Right cardiac atrium (tissue), 5 donors: ENCODE measurements at regions of chr14 and their contacts with region 1.

Region 1: DNA sequence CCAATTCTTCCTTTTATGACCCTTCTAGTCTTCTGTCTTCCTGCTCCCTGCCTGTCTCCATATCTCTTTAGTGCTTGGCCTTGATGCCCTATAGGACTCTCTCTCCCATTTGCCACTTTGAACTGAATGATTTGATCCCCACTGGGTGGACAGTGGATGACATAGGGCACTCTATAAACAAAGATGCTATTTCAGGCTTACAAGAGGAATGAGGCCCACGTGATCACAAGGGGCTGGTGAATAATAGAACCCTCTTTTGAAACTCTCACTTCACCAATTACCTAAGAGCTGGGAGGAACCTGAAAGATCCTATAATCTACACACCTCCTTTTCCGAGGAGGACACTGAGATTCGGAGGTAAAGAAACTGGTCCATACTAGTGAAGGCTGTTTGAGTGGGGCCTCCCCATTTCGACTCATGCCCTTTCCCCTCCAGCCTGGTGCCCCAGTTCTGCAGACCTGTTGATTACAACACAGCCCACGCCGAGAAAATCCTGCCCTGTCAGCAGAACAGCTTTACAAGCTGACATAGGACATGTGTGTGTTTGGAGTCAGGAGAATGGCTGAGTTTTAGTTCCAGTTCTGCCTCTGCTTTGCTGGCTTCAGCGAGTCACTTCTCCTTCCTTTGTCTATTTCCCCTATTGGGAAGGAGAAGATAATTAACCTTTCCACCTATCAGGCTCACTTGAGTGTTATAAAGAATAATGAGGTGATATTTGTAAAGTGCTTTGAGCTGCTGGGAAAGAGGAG is 400.3 kb downstream of the ZFP36L1 start:
- DNase-seq: peak; percentile 63 to 83 (median 79)
- ATAC-seq: peak; percentile 51 to 64
- H3K4me3 ChIP-seq: no peak overlapping the region
- H3K27ac ChIP-seq: peak overlapping the region; percentile 85
- H3K4me1 ChIP-seq: peaks cover 18% of the 10 kb centered on the region
- H3K27me3 ChIP-seq: no peaks in the 10 kb centered on the region

Region 2: DNA sequence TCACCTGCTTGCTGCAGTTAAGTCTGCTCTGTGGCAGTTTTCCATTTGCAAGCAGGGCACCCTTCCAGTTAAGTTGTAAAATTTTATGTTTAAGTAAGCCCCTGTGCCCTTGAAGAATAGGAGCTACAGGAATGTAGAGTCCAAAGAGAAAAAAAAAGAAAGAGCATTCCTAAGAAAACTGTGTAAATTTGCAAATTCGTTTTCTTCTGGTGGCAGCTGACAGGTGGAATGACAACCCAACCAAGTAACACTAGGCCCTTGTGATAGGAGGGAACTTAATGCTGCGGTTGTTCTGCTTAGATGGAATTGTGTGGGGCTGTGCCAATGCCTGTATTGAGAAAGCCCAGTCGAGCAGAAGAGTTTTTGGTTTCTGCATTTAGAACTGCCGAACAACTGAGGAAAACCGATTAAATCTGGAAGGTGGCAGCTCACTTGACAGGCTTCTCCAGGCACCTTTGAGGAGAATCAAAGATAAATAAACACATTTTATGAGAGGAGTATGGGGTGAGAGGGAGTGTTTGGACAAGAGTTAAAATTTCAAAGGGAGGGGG is 293.0 kb before region 1 on chr14:
- intact Hi-C with region 1: no loop called
- DNase-seq: no peak
- ATAC-seq: no peak
- H3K4me3 ChIP-seq: no peak overlapping the region
- H3K27ac ChIP-seq: no peak overlapping the region
- H3K4me1 ChIP-seq: no peaks in the 10 kb centered on the region
- H3K27me3 ChIP-seq: no peaks in the 10 kb centered on the region

Region 3: DNA sequence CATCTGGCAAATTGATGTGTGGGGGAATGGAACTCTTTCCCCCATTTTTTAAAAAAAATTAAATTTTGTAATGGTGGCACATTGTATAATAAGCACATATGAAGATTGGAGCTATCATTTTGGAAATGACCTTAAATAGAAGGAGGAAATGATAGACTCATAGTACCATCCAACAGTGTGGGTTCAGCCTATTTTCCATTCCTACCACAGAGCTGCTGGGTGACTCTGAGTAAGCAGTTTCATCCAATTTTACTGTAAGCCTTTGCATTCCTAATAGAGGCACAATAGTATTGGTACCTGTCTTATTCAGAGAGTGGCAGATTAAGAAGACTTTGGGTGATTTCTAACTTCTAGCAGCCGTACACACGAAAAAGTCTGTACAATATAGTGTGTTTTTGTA is 268.5 kb before region 1 on chr14:
- intact Hi-C with region 1: no loop called
- DNase-seq: no peak
- ATAC-seq: no peak
- H3K4me3 ChIP-seq: no peak overlapping the region
- H3K27ac ChIP-seq: no peak overlapping the region
- H3K4me1 ChIP-seq: no peaks in the 10 kb centered on the region
- H3K27me3 ChIP-seq: no peaks in the 10 kb centered on the region

Region 4: GRCh38 chr14:68199554-68200151 is 192.9 kb before region 1 on chr14:
- intact Hi-C with region 1: no loop called
- DNase-seq: peak; percentile 51 to 72 (median 55)
- ATAC-seq: peak; percentile 88 to 97
- H3K4me3 ChIP-seq: no peak overlapping the region
- H3K27ac ChIP-seq: peak overlapping the region; percentile 83
- H3K4me1 ChIP-seq: peaks cover 1% of the 10 kb centered on the region
- H3K27me3 ChIP-seq: no peaks in the 10 kb centered on the region

Region 5: GRCh38 chr14:68458840-68459469 is 66.4 kb after region 1 on chr14:
- intact Hi-C with region 1: loop called in 1 of 4 experiments (anchors 10 kb)
- DNase-seq: peak in 1 of 3 donors; percentile 32
- ATAC-seq: peak; percentile 57 to 76
- H3K4me3 ChIP-seq: no peak overlapping the region
- H3K27ac ChIP-seq: peak overlapping the region; percentile 55
- H3K4me1 ChIP-seq: peaks cover 8% of the 10 kb centered on the region
- H3K27me3 ChIP-seq: no peaks in the 10 kb centered on the region

Region 6: GRCh38 chr14:68510201-68511128 is 117.9 kb after region 1 on chr14:
- intact Hi-C with region 1: loop called in 1 of 4 experiments (anchors 10 kb)
- DNase-seq: peak in 1 of 3 donors; percentile 67
- ATAC-seq: peak in 1 of 2 donors; percentile 16
- H3K4me3 ChIP-seq: no peak overlapping the region
- H3K27ac ChIP-seq: peak overlapping the region; percentile 12
- H3K4me1 ChIP-seq: peaks cover 11% of the 10 kb centered on the region
- H3K27me3 ChIP-seq: no peaks in the 10 kb centered on the region

Region 7: DNA sequence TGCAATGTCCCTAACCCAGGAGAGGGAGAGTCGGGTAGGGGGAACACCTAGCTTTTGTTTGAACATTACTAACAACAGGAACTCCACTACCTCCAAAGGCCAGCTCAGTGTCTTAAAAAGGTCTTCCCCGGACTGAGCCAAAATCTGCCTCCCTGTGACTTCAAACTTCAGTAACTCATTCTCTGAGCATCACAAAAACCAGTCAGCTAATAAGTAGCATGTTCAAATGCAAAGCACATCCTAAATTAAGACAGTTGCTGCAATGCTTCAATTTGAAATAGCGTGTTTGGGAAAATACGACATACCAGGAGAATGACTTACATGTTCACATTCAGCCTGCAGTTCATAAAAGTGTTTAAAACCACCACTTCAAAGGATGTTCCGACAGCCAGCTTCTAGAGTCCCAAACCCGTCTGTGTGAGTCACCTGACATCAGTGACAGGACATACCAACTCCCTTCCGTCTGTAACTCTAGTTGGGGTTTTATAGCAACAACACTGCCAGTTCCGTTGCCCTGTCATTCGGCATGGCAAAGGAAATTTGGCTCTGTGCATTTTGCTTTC is 387.3 kb after region 1 on chr14:
- intact Hi-C with region 1: loop called in 2 of 4 experiments (anchors 10 kb)
- DNase-seq: no peak
- ATAC-seq: no peak
- H3K4me3 ChIP-seq: no peak overlapping the region
- H3K27ac ChIP-seq: peak overlapping the region; percentile 83
- H3K4me1 ChIP-seq: peaks cover 18% of the 10 kb centered on the region
- H3K27me3 ChIP-seq: no peaks in the 10 kb centered on the region

Region 8: GRCh38 chr14:68788996-68789820 is 396.6 kb after region 1 on chr14:
- intact Hi-C with region 1: loop called in 1 of 4 experiments (anchors 10 kb)
- DNase-seq: peak; percentile 89 to 95 (median 94)
- ATAC-seq: peak; percentile 26 to 44
- H3K4me3 ChIP-seq: peak overlapping the region; percentile 90
- H3K27ac ChIP-seq: peak overlapping the region; percentile 54
- H3K4me1 ChIP-seq: peaks cover 4% of the 10 kb centered on the region
- H3K27me3 ChIP-seq: no peaks in the 10 kb centered on the region

Region 9: DNA sequence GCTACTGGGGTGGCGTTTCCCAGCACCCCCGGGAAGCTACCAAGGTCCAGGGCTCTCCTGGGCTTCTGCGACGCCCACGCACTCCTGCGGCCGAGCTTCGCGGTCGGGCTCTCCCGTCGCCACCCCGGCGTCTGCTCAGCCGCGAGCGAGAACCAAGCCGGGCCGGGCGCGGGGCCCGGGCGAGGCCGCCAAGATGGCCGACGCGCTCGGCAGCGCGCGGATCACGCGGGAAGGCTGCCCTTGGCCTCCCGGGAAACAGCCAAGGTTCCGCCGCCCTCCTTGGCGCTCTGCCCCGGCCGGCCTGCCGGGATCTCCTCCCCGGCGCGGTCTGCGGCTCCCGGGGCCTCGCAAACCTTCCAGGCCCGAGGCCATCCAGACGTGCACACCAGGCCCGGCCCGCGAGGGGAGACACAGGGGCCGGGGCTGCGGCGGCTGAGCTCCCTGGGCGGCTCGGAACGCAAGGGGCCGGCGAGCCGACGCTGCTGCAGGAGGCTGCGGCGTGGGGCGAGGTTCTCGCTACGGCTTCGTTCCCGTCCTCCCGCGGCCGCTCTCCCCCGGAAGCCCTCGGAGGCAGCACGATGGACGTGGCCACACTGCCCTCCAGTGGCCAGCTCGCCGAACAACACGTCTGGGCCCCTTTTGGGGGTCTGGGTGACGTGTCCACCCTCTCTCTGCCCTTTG is 423.8 kb after region 1 on chr14:
- intact Hi-C with region 1: loop called in 1 of 4 experiments (anchors 5 kb)
- DNase-seq: peak; percentile 91 to 97 (median 97)
- ATAC-seq: peak; percentile 92 to 94
- H3K4me3 ChIP-seq: peak overlapping the region; percentile 18
- H3K27ac ChIP-seq: peak overlapping the region; percentile 91
- H3K4me1 ChIP-seq: peaks cover 20% of the 10 kb centered on the region
- H3K27me3 ChIP-seq: no peaks in the 10 kb centered on the region